ENCODE measurements at regions of chr1 and their contacts with region 1.

Region 1: DNA sequence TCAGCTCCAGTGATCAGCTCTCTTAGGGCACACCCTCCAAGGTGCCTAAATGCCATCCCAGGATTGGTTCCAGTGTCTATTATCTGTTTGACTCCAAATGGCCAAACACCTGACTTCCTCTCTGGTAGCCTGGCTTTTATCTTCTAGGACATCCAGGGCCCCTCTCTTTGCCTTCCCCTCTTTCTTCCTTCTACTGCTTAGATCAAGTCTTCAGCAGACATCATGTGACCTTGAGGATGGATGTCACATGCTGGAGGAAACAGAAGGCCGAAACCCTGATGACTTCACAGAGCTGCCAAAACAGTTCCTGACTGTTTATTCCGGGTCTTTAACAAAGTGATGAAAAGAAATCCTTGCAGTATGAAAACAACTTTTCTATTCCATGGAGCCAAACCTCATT is 24.4 kb upstream of the WDR26 start:
- DNase-seq: no peak
- ATAC-seq: no peak
- H3K4me3 Mint-ChIP-seq: no peak overlapping the region
- H3K27ac Mint-ChIP-seq: no peak overlapping the region
- H3K4me1 Mint-ChIP-seq: peaks cover 31% of the 10 kb centered on the region
- H3K27me3 Mint-ChIP-seq: no peaks in the 10 kb centered on the region

Region 2: DNA sequence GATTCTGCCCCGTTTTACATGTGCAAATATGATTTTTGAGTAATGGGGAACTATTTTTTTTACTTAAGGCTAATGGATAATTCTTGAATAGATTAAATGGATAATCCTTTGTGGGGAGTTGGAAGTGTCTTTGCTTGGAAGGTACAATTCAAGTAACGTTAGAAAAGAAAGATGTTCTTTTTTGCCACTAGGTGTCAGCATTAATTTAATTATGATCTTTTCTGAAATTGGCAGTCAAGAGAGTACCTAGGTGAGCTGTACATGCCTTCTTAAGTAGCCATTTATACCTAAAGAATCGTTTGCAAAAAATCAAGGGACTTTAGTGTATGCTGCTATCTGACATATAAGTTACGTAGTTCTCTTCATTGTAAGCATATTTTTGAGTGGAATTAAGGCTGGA is 342.9 kb before region 1 on chr1:
- CTCF ChIA-PET with region 1: interaction called, 33 read pairs
- POLR2A ChIA-PET with region 1: no interaction called
- DNase-seq: no peak
- ATAC-seq: peak; percentile 36
- H3K4me3 Mint-ChIP-seq: peak overlapping the region; percentile 38
- H3K27ac Mint-ChIP-seq: peak overlapping the region; percentile 34
- H3K4me1 Mint-ChIP-seq: peaks cover 38% of the 10 kb centered on the region
- H3K27me3 Mint-ChIP-seq: peaks cover 8% of the 10 kb centered on the region

Region 3: DNA sequence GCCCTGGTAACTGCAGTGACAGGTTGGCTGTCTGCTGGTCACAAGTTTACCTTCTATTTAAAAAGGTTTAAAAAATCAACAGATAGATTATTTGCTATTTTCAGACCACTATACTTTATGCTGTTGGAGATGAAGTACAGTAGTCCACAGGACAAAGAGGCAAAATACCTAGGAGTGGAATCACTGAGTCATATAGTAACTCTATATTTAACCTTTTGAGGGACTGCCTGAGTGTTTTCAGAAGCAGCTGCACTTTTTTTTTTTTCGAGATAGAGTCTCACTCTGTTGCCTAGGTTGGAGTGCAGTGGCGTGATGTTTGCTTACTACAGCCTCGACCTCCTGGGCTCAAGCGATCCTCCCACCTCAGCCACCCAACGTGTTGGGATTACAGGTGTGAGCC is 90.6 kb before region 1 on chr1:
- CTCF ChIA-PET with region 1: interaction called, 12 read pairs
- POLR2A ChIA-PET with region 1: no interaction called
- DNase-seq: no peak
- ATAC-seq: no peak
- H3K4me3 Mint-ChIP-seq: no peak overlapping the region
- H3K27ac Mint-ChIP-seq: no peak overlapping the region
- H3K4me1 Mint-ChIP-seq: peaks cover 27% of the 10 kb centered on the region
- H3K27me3 Mint-ChIP-seq: no peaks in the 10 kb centered on the region

Region 4: GRCh38 chr1:224411766-224412165 is 47.2 kb before region 1 on chr1:
- CTCF ChIA-PET with region 1: interaction called, 10 read pairs
- POLR2A ChIA-PET with region 1: no interaction called
- DNase-seq: no peak
- ATAC-seq: peak; percentile 48
- H3K4me3 Mint-ChIP-seq: no peak overlapping the region
- H3K27ac Mint-ChIP-seq: peak overlapping the region; percentile 26
- H3K4me1 Mint-ChIP-seq: peaks cover 11% of the 10 kb centered on the region
- H3K27me3 Mint-ChIP-seq: no peaks in the 10 kb centered on the region

Region 5: DNA sequence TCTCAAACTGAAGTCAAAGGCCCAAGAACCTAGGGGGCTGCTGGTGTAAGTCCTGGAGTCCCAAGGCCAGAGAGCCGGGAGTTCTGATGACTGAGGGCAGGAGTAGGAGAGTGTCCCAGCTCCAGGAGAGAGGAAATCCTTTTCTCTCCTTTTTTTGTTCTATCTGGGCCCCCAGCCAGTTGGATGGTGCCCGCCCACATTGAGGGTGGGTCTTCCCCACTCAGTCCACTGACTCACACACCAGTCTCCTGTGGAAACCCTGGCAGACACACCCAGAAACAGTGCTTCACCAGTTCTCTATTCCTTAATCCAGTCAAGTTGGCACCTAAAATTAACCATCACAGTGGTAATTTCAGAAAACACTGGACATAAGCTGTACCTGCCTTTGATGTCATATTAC is 11.7 kb before region 1 on chr1:
- CTCF ChIA-PET with region 1: interaction called, 24 read pairs
- POLR2A ChIA-PET with region 1: no interaction called
- DNase-seq: no peak
- ATAC-seq: no peak
- H3K4me3 Mint-ChIP-seq: no peak overlapping the region
- H3K27ac Mint-ChIP-seq: no peak overlapping the region
- H3K4me1 Mint-ChIP-seq: peaks cover 11% of the 10 kb centered on the region
- H3K27me3 Mint-ChIP-seq: no peaks in the 10 kb centered on the region

Region 6: DNA sequence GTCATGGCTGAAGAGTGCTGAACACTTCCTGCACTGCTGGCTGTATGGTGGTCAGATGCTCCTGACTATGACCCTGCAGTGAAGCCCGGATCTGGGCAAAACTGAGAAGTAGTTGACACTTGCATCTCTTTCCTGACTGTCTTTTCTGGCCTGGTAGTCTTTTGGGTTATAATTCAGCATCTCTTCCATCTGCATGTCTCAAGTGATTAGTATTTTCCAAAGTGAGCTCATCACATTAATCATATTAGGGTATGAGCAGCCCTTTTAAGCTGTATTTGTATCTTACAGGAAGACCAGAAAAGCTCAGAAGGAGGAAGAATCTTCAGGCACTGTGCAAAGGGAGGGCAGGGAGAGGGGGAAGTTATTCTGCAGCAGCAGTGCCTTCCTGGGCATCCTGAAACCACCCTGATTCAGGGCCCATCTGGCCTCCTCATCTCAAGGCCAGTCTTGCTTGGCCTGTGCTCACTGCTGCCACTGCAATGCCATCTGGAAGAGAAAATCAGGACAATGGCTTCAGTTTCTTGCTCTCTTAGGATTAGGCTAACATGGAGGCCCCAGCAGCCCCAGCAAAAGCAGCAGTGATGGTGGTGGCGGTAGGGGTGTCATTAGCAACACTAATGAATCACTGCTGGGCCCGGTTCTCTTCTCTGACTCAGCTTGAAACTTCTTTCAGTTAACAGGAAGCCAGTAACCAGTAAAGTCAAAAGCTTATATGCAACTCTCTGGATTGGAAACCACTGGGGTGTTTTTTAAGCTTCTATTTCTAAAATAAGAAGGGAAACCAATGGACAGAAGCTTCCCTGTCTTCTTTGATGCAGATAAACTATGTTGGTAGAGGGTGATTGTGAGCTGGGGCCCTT is 38.9 kb after region 1 on chr1:
- CTCF ChIA-PET with region 1: interaction called, 19 read pairs
- POLR2A ChIA-PET with region 1: no interaction called
- DNase-seq: peak; percentile 84
- ATAC-seq: peak; percentile 93
- H3K4me3 Mint-ChIP-seq: peak overlapping the region; percentile 28
- H3K27ac Mint-ChIP-seq: peak overlapping the region; percentile 87
- H3K4me1 Mint-ChIP-seq: peaks cover 54% of the 10 kb centered on the region
- H3K27me3 Mint-ChIP-seq: no peaks in the 10 kb centered on the region